Heart left ventricle (tissue), 16 donors: ENCODE measurements at regions of chr6 and their contacts with region 1.

Region 1: GRCh38 chr6:127464881-127465459 is 5.8 kb upstream of the KIAA0408 start:
- DNase-seq: peak; percentile 51 to 66 (median 62)
- ATAC-seq: peak; percentile 44 to 94 (median 89)
- H3K4me3 ChIP-seq: no peak overlapping the region
- H3K27ac ChIP-seq: peak overlapping the region in 5 of 12 donors; percentile 3 to 65 (median 44)
- H3K4me1 ChIP-seq: peaks cover 0 to 3% (median 0%) of the 10 kb centered on the region in 12 donors
- H3K27me3 ChIP-seq: no peaks in the 10 kb centered on the region
- CTCF ChIP-seq: peak; percentile 61 to 86 (median 74)
- POLR2A ChIP-seq: no peak

Region 2: GRCh38 chr6:127266178-127266891 is 198.6 kb before region 1 on chr6 and contains the start of gene RNF146:
- intact Hi-C with region 1: no loop called
- DNase-seq: peak; percentile 85 to 92 (median 88)
- ATAC-seq: peak; percentile 79 to 96 (median 94)
- H3K4me3 ChIP-seq: peak within 1 kb of the TSS; percentile 63 to 95 (median 88)
- H3K27ac ChIP-seq: peak within 1 kb of the TSS; percentile 95 to 100 (median 99)
- H3K4me1 ChIP-seq: peaks cover 0 to 41% (median 27%) of the 10 kb centered on the region in 12 donors
- H3K27me3 ChIP-seq: no peaks in the 10 kb centered on the region
- CTCF ChIP-seq: peak; percentile 56 to 91 (median 72)
- POLR2A ChIP-seq: no peak
- total RNA-seq, gene RNF146: 41.0 to 78.9 (median 47.9) TPM

Region 3: DNA sequence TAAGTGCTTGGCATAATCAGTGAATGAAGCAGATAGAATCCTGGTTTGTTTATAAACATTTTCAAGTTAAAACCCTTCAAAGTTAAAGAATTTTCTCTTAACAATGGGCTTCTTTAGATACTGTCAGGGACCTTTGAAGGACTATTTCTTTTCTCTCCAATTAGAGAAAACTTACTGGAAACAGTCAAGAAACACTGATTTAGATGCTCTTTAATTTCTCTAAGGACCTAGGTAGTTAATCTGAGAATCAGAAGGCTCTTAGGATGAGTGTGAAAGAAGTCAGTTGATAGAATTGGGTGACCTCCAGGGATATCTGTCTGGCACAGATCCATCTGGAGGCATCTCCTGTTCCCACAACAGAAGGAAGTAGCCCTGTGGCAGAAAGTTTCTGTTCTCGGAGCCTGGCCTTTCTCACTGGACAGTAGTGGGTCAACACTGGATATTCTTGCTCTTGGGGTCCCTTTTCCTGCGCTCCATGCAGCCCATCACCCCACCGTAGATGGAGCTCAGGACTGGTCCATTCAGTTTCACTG is 28.3 kb before region 1 on chr6:
- intact Hi-C with region 1: no loop called
- DNase-seq: no peak
- ATAC-seq: peak in 1 of 4 donors; percentile 30
- H3K4me3 ChIP-seq: no peak overlapping the region
- H3K27ac ChIP-seq: no peak overlapping the region
- H3K4me1 ChIP-seq: no peaks in the 10 kb centered on the region
- H3K27me3 ChIP-seq: no peaks in the 10 kb centered on the region
- CTCF ChIP-seq: no peak
- POLR2A ChIP-seq: no peak

Region 4: GRCh38 chr6:127539272-127539671 is 74.3 kb after region 1 on chr6:
- intact Hi-C with region 1: loop called in 7 of 10 experiments (anchors 2 to 10 kb)
- DNase-seq: no peak
- ATAC-seq: no peak
- H3K4me3 ChIP-seq: no peak overlapping the region
- H3K27ac ChIP-seq: no peak overlapping the region
- H3K4me1 ChIP-seq: no peaks in the 10 kb centered on the region
- H3K27me3 ChIP-seq: peaks cover 0 to 23% (median 2%) of the 10 kb centered on the region in 9 donors
- CTCF ChIP-seq: peak; percentile 16 to 63 (median 34)
- POLR2A ChIP-seq: no peak

Region 5: DNA sequence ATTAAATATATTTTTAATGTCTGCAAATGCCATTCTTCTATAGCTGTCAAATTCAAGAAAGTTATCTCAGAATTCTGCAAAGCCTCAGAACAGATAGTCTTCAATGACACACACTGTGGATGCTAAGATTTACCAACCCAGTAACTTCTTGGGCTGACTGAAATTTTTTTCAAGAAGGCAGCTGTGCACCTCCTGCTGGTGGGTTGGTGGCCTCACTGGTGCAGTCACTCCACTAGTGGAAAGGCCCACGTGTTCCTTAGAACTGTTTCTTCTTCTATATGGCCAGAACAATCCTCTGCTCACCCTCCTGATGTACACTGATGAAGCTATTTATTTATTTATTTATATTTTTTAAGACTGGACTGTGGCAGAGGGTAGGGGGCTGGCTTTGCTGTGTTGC is 82.2 kb after region 1 on chr6:
- intact Hi-C with region 1: loop called in 5 of 10 experiments (anchors 5 to 10 kb)
- DNase-seq: no peak
- ATAC-seq: no peak
- H3K4me3 ChIP-seq: no peak overlapping the region
- H3K27ac ChIP-seq: no peak overlapping the region
- H3K4me1 ChIP-seq: no peaks in the 10 kb centered on the region
- H3K27me3 ChIP-seq: peaks cover 0 to 18% (median 0%) of the 10 kb centered on the region in 9 donors
- CTCF ChIP-seq: peak in 6 of 12 donors; percentile 5 to 21 (median 10)
- POLR2A ChIP-seq: no peak

Region 6: DNA sequence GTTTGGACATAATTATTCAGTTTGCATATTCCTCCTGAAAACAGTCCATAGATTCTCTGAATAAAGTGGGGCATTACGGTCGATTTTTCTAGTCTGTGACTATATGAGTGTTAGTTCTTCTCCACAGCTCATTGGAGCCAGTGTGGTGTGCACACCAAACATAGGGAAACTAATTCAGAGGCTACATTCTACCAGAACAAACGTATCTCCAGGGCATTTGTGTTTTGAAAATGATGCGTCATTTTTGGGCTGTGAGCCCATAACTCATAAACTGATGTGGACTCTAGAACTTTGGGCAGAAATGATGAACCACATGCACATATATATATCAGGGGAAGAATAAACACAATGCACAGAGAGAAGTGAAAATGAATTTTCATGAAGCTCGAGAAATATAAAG is 153.8 kb after region 1 on chr6:
- intact Hi-C with region 1: no loop called
- DNase-seq: no peak
- ATAC-seq: no peak
- H3K4me3 ChIP-seq: no peak overlapping the region
- H3K27ac ChIP-seq: no peak overlapping the region
- H3K4me1 ChIP-seq: no peaks in the 10 kb centered on the region
- H3K27me3 ChIP-seq: no peaks in the 10 kb centered on the region
- CTCF ChIP-seq: no peak
- POLR2A ChIP-seq: no peak

Region 7: DNA sequence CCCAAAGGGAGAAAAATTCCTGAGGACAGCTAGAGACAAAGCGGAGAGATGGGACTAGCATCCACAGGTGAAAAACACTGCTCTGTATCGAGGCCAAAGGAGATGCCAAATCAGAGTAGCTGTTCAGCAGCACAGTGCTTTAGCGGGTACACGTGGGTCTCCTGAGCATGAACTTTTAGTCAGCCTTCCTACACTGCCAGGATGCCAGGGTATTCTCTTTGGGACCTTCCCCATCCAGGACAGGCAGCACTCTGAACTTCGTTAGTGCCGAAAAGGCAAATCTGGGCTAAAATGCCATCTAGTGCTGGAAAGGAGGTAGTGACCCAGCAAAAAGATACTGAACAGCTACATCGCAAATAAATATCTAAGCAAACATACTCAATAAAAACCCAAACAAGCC is 176.9 kb after region 1 on chr6:
- intact Hi-C with region 1: loop called in 3 of 10 experiments (anchors 5 to 10 kb)
- DNase-seq: no peak
- ATAC-seq: no peak
- H3K4me3 ChIP-seq: no peak overlapping the region
- H3K27ac ChIP-seq: no peak overlapping the region
- H3K4me1 ChIP-seq: peaks cover 0 to 3% (median 0%) of the 10 kb centered on the region in 12 donors
- H3K27me3 ChIP-seq: peaks cover 0 to 8% (median 0%) of the 10 kb centered on the region in 9 donors
- CTCF ChIP-seq: peak in 11 of 12 donors; percentile 26 to 55 (median 44)
- POLR2A ChIP-seq: no peak

Region 8: GRCh38 chr6:128403618-128404444 is 938.9 kb after region 1 on chr6:
- intact Hi-C with region 1: no loop called
- DNase-seq: no peak
- ATAC-seq: no peak
- H3K4me3 ChIP-seq: no peak overlapping the region
- H3K27ac ChIP-seq: no peak overlapping the region
- H3K4me1 ChIP-seq: peaks cover 0 to 9% (median 0%) of the 10 kb centered on the region in 12 donors
- H3K27me3 ChIP-seq: no peaks in the 10 kb centered on the region
- CTCF ChIP-seq: no peak
- POLR2A ChIP-seq: no peak